ENCODE measurements at regions of chr1 and their contacts with region 1.

Region 1: GRCh38 chr1:155050560-155051341 is at the start of gene ADAM15:
- DNase-seq: peak; percentile 81
- ATAC-seq: peak; percentile 89
- H3K4me3 Mint-ChIP-seq: peak within 1 kb of the TSS; percentile 83
- H3K27ac Mint-ChIP-seq: peak within 1 kb of the TSS; percentile 85
- H3K4me1 Mint-ChIP-seq: peaks cover 31% of the 10 kb centered on the region
- H3K27me3 Mint-ChIP-seq: peaks cover under 1% of the 10 kb centered on the region
- total RNA-seq, gene ADAM15: 29.7 to 29.8 TPM

Region 2: GRCh38 chr1:154819628-154820590 is 230.8 kb before region 1 on chr1:
- CTCF ChIA-PET with region 1: no interaction called
- POLR2A ChIA-PET with region 1: no interaction called
- DNase-seq: peak; percentile 38
- ATAC-seq: peak; percentile 75
- H3K4me3 Mint-ChIP-seq: no peak overlapping the region
- H3K27ac Mint-ChIP-seq: peak overlapping the region; percentile 75
- H3K4me1 Mint-ChIP-seq: peaks cover 16% of the 10 kb centered on the region
- H3K27me3 Mint-ChIP-seq: peaks cover 2% of the 10 kb centered on the region

Region 3: DNA sequence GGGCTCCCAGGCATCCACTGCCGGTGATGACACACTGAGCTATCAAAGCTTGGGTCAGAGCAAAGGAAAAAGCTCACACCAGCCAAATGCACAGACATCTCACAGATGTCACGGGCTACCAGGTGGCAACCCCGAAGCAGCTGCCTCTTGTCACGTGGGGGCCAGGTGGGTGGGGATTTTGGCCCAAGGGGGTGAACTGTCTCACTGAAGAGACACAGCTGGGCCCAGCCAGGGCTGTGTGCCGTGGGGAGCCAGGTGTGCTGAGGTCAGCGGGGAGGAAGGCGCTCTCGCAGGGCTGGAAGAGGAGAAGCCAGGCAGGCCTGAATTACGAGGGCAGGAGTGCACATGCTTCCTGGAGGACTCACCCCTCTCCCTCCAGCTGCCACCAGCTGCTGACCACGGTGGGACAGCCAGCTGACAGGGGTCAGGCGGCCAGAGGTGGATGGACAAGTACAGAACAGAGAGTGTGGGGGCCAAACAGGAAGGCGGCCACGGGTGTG is 213.0 kb before region 1 on chr1:
- CTCF ChIA-PET with region 1: no interaction called
- POLR2A ChIA-PET with region 1: no interaction called
- DNase-seq: no peak
- ATAC-seq: no peak
- H3K4me3 Mint-ChIP-seq: no peak overlapping the region
- H3K27ac Mint-ChIP-seq: no peak overlapping the region
- H3K4me1 Mint-ChIP-seq: peaks cover 7% of the 10 kb centered on the region
- H3K27me3 Mint-ChIP-seq: peaks cover 6% of the 10 kb centered on the region

Region 4: GRCh38 chr1:154982897-154983648 is 67.7 kb before region 1 on chr1 and contains the start of gene FLAD1:
- CTCF ChIA-PET with region 1: interaction called, 10 read pairs
- POLR2A ChIA-PET with region 1: no interaction called
- DNase-seq: peak; percentile 99
- ATAC-seq: peak; percentile 100
- H3K4me3 Mint-ChIP-seq: no peak within 1 kb of the TSS
- H3K27ac Mint-ChIP-seq: peak within 1 kb of the TSS; percentile 67
- H3K4me1 Mint-ChIP-seq: peaks cover 20% of the 10 kb centered on the region
- H3K27me3 Mint-ChIP-seq: no peaks in the 10 kb centered on the region
- total RNA-seq, gene FLAD1: 39.8 to 45.2 TPM

Measured in activated CD8-positive, alpha-beta T cell treated with anti-CD3 and anti-CD28 coated beads, Interleukin-2, amount 10 ng/mL, durations not matched to agents 7 days and 5 days (primary cell).